ENCODE measurements at regions of chr11 and their contacts with region 1.

Region 1: DNA sequence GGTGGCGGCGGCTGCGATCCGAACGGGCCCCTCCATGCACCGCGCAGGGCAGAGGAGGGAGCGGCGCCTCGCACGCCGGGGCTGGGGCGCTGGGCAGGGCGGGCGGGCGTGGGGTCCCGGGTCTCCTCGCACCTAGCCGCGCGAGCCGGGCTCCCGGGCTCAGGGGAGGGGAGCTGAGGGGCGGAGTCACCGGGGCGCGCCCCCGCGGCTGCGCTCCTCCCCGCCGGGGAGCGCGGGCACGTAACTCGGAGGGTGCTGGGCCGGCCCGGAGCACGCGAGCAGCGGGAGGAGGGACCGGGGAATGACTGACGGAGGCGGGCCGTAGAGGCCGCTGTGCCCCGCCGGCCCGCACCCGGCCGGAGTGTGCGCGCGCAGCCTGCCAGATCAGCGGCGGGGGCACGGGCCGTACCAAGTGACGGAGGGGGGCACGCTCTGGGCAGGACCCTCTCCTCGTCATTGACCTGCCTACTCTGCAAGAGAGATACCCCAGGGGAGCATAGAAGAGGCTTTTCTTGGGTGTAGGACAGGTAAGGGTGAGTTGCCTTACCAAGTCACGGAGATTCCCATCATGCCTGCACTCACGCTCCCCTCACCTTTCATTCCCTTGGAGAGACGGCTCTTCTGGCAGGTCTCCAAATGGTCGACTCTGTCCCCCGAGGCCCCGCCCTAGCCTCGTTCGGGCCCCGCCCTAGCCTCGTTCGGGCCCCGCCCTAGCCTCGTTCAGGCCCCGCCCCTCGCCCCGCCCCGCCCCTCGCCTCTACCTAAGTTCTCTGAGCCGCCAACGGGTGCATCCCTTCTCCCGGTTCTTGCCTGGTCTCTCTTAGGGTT is at the start of gene CDON:
- DNase-seq: peak; percentile 91 to 95 (median 93)
- ATAC-seq: peak; percentile 98 to 99 (median 98)
- H3K4me3 ChIP-seq: peak within 1 kb of the TSS; percentile 60 to 94 (median 73)
- H3K27ac ChIP-seq: peak within 1 kb of the TSS in 11 of 12 donors; percentile 50 to 85 (median 75)
- H3K4me1 ChIP-seq: peaks cover 0 to 20% (median 8%) of the 10 kb centered on the region in 12 donors
- H3K27me3 ChIP-seq: peaks cover 0 to 12% (median 0%) of the 10 kb centered on the region in 9 donors
- CTCF ChIP-seq: peak in 7 of 12 donors; percentile 8 to 51 (median 29)
- POLR2A ChIP-seq: peak in 1 of 2 donors; percentile 54
- total RNA-seq, gene CDON: 5.0 to 51.5 (median 7.4) TPM

Region 2: DNA sequence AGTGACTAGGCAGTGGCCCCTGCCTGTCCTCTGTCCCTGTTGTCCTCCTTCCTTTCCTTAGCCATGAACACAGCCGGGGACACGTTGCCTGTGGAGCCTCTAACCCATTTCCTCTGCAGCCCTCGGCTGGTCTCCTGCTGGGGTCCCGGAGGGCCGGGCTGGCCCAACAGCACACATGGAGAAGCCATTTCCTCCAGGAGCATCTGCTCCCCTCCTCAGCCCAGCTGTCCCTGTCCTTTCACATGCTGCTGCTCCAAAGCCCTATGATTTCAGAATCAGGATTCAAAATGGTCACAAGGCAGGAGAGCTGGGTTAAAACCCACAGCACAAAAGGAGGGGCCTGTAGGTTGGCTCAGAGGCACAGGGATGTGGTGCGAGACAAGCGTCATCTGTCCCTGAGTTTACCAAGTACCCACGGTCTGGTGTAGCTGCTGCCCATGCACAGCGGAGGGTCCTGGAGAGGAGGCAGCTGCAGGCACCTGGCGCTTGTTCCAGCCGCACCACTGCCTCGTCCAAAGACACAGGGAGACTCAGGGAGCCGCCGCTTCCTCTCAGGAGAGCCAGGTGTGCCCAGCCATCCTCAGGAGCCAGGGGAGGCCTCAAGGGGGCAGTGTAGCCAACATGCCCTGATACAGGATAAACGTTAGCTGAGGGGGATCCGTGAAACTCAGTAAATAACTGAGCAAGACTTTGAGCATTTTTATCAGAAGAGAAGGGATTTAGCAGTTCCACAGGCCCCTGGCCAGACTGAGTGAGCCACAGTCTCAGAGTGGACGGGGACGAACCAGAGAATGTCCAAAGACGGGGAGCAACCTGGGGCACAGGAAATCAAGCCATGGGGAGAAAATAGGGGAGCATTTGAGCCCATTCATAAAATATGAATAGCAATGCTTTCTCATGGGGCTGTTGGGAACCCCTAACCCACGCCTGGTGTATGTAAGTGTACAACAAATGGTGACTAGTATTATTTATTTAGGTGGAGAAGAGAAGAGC is 121.0 kb before region 1 on chr11:
- intact Hi-C with region 1: loop called in 3 of 10 experiments (anchors 5 to 10 kb)
- DNase-seq: peak in 4 of 5 donors; percentile 55 to 79 (median 61)
- ATAC-seq: peak; percentile 61 to 80 (median 76)
- H3K4me3 ChIP-seq: no peak overlapping the region
- H3K27ac ChIP-seq: peak overlapping the region in 10 of 12 donors; percentile 6 to 68 (median 55)
- H3K4me1 ChIP-seq: peaks cover 0 to 32% (median 11%) of the 10 kb centered on the region in 12 donors
- H3K27me3 ChIP-seq: peaks cover 0 to 7% (median 0%) of the 10 kb centered on the region in 9 donors
- CTCF ChIP-seq: peak; percentile 51 to 76 (median 66)
- POLR2A ChIP-seq: no peak

Region 3: DNA sequence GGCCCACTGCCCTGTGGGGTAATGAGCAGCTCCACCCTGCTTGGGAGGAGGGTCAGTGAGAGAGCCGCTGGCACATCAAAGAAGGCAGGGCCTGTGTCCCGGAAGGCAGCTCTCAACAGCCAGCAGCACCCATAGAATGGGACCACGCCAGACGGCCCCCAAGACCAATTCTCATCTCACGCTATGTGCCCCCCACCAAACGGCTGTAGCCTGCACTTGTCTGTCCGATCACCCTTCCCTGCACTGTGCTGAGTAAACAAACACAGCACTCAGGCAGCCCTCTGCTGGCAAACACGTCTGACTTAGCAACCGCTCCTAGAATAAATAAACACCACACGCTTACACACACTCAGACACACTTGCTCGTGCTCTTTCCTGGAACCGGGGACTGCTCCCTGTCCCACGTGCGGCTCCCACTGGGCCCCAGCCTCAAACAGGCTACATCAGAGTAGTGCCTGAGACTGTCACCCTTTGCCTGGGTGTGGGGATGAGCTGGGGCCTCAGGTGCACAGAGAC is 53.0 kb after region 1 on chr11:
- intact Hi-C with region 1: loop called in 4 of 10 experiments (anchors 2 to 5 kb)
- DNase-seq: peak in 4 of 5 donors; percentile 48 to 82 (median 68)
- ATAC-seq: peak; percentile 64 to 79 (median 76)
- H3K4me3 ChIP-seq: no peak overlapping the region
- H3K27ac ChIP-seq: peak overlapping the region; percentile 60 to 89 (median 80)
- H3K4me1 ChIP-seq: peaks cover 3 to 59% (median 44%) of the 10 kb centered on the region in 12 donors
- H3K27me3 ChIP-seq: no peaks in the 10 kb centered on the region
- CTCF ChIP-seq: peak in 6 of 12 donors; percentile 6 to 41 (median 20)
- POLR2A ChIP-seq: no peak

Region 4: DNA sequence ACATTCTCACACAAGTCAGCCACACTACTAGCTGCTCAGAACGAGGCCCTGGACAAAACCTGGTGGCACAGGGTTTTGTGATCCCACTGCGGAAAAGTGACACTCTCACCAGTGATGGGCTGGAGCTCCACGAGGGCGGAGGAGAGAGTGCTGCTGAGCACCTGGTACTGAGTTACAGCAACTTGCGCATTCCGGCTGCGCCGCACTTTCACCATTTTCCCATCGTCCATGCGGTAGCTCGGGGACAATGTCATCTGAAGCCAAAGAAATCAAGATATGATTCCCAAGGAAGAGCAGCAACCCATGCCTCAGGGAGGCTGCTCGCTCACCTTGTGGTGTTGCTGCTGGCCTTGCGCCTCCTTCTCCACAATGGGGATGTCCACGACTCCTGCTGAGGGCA is 142.5 kb after region 1 on chr11:
- intact Hi-C with region 1: loop called in 2 of 10 experiments (anchors 5 kb)
- DNase-seq: no peak
- ATAC-seq: no peak
- H3K4me3 ChIP-seq: no peak overlapping the region
- H3K27ac ChIP-seq: no peak overlapping the region
- H3K4me1 ChIP-seq: peaks cover 0 to 38% (median 6%) of the 10 kb centered on the region in 12 donors
- H3K27me3 ChIP-seq: no peaks in the 10 kb centered on the region
- CTCF ChIP-seq: no peak
- POLR2A ChIP-seq: no peak

Region 5: GRCh38 chr11:126268708-126269579 is 206.1 kb after region 1 on chr11 and contains the starts of genes FOXRED1 and SRPRA:
- intact Hi-C with region 1: loop called in 1 of 10 experiments (anchors 5 kb)
- DNase-seq: peak; percentile 100
- ATAC-seq: peak; percentile 99 to 100 (median 100)
- H3K4me3 ChIP-seq: peak within 1 kb of the TSS; percentile 63 to 99 (median 78)
- H3K27ac ChIP-seq: peak within 1 kb of the TSS; percentile 56 to 97 (median 90)
- H3K4me1 ChIP-seq: peaks cover 0 to 26% (median 15%) of the 10 kb centered on the region in 12 donors
- H3K27me3 ChIP-seq: no peaks in the 10 kb centered on the region
- CTCF ChIP-seq: no peak
- POLR2A ChIP-seq: peak in 1 of 2 donors; percentile 78
- total RNA-seq, gene FOXRED1: 22.0 to 49.1 (median 31.8) TPM
- total RNA-seq, gene SRPRA: 65.0 to 90.8 (median 79.3) TPM